Right ventricle myocardium superior (tissue), 1 donor: ENCODE measurements at regions of chr2 and their contacts with region 1.

Region 1: GRCh38 chr2:35408320-35408719 is 947.3 kb upstream of the CRIM1 start:
- DNase-seq: no peak
- ATAC-seq: no peak

Region 2: GRCh38 chr2:33673937-33674336 is 1734.4 kb before region 1 on chr2:
- intact Hi-C with region 1: loop called (anchors 10 kb)
- DNase-seq: no peak
- ATAC-seq: no peak

Region 3: GRCh38 chr2:34096562-34097171 is 1311.7 kb before region 1 on chr2:
- intact Hi-C with region 1: loop called (anchors 10 kb)
- DNase-seq: no peak
- ATAC-seq: peak; percentile 57

Region 4: DNA sequence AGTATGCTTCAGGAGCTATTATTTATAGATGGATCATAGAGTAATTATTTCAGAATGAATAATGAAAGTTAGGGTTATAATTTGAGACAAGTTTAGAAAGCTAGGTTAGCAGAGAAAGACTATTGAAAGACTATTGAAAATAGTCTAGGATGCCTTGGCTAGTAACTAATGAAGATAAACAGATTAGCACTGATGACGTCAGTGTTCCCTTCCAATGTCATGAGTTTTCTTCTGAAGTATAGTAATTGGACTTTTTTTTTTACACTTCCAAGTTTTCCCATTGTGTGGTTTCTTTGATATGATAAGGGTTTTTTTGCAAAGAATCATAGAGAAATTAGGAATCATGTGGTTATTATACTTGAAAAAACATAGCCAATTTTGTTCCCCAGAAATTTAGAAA is 94.3 kb before region 1 on chr2:
- intact Hi-C with region 1: no loop called
- DNase-seq: no peak
- ATAC-seq: no peak

Region 5: GRCh38 chr2:35356332-35356731 is 52.0 kb before region 1 on chr2:
- intact Hi-C with region 1: no loop called
- DNase-seq: no peak
- ATAC-seq: no peak